Activated CD8-positive, alpha-beta T cell treated with anti-CD3 and anti-CD28 coated beads, Interleukin-2, amount 10 ng/mL, durations not matched to agents 7 days and 5 days (primary cell): ENCODE measurements at regions of chr15 and their contacts with region 1.

Region 1: DNA sequence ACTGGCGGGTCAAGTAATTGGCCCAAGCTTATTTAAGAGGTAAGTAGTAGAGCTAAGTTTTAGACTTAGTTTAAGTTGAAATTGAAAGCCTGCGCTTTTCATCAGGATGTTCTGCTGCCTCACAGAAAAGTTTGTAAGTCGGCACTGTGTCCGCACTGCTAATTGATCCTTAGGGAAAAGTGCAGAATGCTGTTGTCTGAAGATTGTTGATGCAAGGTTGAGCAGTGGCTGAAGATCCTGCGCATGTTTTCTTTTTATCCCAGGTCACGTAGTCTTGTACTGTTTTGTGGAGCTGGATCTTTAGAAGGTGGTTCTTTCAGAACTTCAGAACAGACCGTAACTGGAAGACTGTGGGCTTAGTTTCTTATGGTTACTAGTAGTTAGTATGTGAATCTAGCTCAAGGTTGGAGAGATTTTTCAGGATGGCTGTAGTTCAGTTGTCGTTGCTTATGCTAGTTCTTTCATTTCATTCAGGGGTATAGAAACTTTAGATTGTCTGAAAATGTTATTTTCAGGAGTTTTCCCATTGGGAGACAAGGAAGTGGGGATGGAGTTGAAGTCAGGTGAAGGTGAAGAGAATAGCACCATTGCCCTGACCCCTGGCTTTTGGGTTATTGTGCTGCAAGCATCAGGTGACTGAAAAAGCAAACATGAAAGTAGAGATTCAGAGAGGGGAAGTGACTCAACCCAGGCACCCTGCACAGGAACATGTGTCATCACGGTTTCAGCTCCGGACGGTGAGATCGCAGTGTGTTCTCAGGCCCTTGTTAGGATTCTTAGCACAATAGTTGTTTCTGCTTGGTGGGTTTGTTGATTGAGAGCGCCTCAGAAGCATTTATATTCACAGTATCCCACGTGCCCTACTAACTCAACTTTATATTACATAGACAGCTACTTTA is 32.8 kb downstream of the AKAP13 start:
- DNase-seq: peak; percentile 87
- ATAC-seq: peak; percentile 99
- H3K4me3 Mint-ChIP-seq: peak overlapping the region; percentile 32
- H3K27ac Mint-ChIP-seq: peak overlapping the region; percentile 68
- H3K4me1 Mint-ChIP-seq: peaks cover 62% of the 10 kb centered on the region
- H3K27me3 Mint-ChIP-seq: no peaks in the 10 kb centered on the region

Region 2: GRCh38 chr15:85289677-85290365 is 123.4 kb before region 1 on chr15:
- CTCF ChIA-PET with region 1: interaction called, 15 read pairs
- POLR2A ChIA-PET with region 1: no interaction called
- DNase-seq: peak; percentile 32
- ATAC-seq: no peak
- H3K4me3 Mint-ChIP-seq: no peak overlapping the region
- H3K27ac Mint-ChIP-seq: no peak overlapping the region
- H3K4me1 Mint-ChIP-seq: no peaks in the 10 kb centered on the region
- H3K27me3 Mint-ChIP-seq: peaks cover 27% of the 10 kb centered on the region

Region 3: DNA sequence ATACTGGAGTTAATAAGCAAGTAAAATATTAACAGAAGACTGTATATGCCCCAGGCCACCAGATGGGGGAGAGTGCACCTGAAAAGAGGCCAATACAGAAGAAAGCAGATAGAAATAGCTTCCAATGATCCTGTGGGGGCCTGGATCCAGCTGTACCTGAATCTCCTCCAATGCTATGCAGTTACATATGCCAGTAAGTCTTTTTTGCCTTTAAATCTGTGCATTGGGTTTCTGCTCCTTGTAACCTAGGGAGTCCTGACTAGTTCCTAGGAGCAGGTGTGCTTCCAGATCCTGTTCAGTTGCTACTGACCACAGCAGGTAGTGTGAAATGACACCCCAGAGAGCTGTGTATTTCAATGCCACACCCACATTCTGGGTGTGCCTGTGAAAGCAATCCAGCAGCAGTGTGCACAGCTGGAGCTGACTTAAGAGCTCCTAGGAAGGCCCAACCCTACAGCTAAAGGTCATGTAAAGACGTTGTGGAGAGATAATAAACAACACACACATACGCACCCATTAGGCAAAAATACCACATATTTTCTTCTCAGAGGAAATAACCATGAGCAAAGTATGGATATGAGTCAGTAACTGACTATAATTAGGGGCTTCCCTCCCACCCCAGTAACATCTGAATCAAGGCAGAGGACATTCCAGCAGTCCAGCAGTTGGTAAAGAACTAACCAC is 95.0 kb before region 1 on chr15:
- CTCF ChIA-PET with region 1: interaction called, 69 read pairs
- POLR2A ChIA-PET with region 1: no interaction called
- DNase-seq: peak; percentile 35
- ATAC-seq: peak; percentile 59
- H3K4me3 Mint-ChIP-seq: no peak overlapping the region
- H3K27ac Mint-ChIP-seq: peak overlapping the region; percentile 68
- H3K4me1 Mint-ChIP-seq: peaks cover 43% of the 10 kb centered on the region
- H3K27me3 Mint-ChIP-seq: no peaks in the 10 kb centered on the region

Region 4: GRCh38 chr15:85380217-85380811 is 32.9 kb before region 1 on chr15 and contains the start of gene AKAP13:
- CTCF ChIA-PET with region 1: interaction called, 36 read pairs
- POLR2A ChIA-PET with region 1: interaction called, 12 read pairs
- DNase-seq: peak; percentile 98
- ATAC-seq: peak; percentile 88
- H3K4me3 Mint-ChIP-seq: peak within 1 kb of the TSS; percentile 86
- H3K27ac Mint-ChIP-seq: peak within 1 kb of the TSS; percentile 91
- H3K4me1 Mint-ChIP-seq: peaks cover 47% of the 10 kb centered on the region
- H3K27me3 Mint-ChIP-seq: peaks cover 13% of the 10 kb centered on the region
- total RNA-seq, gene AKAP13: 112 to 117 TPM

Region 5: DNA sequence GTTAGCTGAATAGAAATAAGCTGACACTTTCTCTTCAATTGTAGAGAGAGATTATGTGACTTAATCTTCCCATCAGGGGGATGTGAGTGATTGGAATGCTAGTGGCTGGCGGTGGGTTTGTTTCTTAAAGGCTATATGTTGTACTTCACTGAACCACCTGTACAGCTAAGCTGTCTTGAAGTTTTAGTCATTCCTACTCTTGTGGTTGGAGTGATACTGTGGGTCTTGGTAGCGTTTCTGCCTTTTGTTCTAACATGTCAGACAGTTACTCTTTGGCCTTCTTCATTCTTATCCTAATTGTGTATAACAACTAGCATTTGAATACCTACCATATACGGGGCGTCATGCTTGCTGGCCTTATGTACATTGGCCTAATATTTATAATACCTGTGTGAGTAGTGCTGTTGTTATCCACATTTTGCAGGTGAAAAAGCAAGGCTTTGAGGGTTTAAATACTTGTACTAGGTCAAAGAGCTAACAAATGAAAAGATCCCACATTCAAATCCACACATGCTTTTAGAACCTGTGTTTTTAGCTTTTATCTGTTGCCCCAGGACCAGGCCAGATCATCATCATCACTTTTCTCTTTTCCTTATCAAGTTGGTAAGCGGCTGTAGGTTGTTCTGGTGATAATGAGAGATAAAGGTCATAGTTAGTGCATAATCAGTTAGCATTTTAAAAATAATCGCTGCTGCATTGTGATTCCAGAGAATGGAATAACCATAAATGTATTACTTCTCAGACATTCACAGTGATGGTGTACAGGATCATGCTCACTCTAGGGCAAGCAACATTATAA is 17.4 kb after region 1 on chr15:
- CTCF ChIA-PET with region 1: interaction called, 11 read pairs
- POLR2A ChIA-PET with region 1: no interaction called
- DNase-seq: no peak
- ATAC-seq: no peak
- H3K4me3 Mint-ChIP-seq: no peak overlapping the region
- H3K27ac Mint-ChIP-seq: no peak overlapping the region
- H3K4me1 Mint-ChIP-seq: peaks cover 18% of the 10 kb centered on the region
- H3K27me3 Mint-ChIP-seq: no peaks in the 10 kb centered on the region

Region 6: DNA sequence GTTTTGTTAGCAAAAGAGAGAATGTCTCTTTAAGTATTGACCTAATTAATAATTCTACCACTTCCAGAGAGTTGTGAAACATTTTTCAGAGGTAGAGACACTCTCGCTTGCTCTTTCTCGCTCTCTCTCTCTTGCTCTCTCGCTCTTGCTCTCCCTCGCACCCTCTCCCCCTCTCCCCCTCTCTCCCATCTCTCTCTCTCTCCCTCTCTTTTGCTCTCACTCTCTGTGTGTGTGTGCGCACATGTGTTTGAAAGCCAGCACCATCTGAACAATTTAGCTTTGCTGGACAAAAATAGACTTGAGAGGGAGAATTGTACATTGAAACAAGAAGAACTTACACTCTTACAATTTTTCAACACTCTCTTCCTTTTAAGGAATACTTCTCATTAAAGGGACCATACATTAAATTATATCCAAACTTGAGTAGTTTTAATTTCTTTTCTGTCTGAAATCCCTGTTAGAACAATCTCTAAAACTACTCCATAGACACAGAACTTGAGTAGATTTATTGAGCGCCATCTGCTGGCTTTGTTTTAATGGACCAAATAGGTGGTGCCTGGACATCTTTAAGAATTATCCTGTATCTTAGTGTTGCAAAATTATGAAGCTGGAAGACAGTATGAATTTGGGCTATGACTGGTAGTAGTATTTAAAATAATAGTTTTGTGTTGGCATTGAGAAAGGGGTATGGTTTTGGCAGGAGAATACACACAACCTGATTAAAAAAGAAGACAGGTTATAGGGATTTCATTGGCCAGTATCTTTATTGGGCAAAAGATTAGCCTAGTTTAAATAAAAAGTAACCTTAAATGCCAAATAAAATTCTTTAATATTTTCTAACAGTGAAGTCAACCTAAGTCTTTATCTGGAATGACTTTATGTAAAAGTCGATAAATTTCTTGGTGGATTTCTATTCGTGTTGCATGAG is 91.8 kb after region 1 on chr15:
- CTCF ChIA-PET with region 1: interaction called, 12 read pairs
- POLR2A ChIA-PET with region 1: no interaction called
- DNase-seq: peak; percentile 66
- ATAC-seq: no peak
- H3K4me3 Mint-ChIP-seq: no peak overlapping the region
- H3K27ac Mint-ChIP-seq: peak overlapping the region; percentile 28
- H3K4me1 Mint-ChIP-seq: peaks cover 10% of the 10 kb centered on the region
- H3K27me3 Mint-ChIP-seq: no peaks in the 10 kb centered on the region